Activated B cell treated with CpG ODN at 0.5 μM for 24 hours (primary cell): ENCODE measurements at regions of chr11 and their contacts with region 1.

Region 1: DNA sequence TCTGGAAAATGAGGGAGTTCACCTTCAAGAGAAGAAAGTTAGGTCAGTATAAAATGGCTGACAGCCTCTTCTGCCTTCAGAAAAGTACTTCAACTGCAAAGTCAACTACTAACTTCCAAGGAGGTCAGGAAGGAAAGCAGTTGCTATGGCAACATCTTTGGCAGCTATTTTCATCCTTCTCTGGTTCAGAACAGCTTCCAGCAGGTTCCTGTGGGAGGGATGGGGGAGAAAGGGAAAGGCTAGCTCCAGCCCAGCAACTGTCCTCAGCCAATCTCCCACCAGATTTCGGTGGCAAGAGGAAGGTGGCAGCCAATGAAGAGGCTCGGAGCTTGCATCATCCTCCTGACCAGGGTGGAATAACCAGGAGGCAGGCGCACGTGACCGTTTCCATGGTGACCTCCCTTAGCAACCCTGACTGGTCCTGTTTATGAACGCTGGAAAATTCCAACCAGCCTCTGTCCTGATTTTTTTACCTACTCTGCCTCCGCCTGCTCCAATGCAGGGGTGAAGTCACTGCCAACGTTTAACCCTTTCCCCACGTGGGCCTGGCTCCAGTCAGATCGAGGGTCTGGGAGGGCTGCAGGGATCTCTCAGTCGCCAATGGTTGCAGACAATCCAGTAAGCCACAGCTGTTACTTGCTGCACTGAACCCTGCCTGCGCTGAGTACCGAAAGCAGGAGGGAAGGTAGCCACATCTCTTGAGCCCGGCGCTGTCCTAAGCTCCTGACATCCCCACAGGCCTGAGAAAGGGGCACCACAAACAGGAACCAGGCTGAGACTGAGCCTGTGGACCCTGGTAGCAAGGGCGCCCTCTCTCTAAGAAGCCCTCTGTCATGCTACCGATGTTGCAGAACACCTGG is 11.2 kb upstream of the MALAT1 start:
- DNase-seq: no peak
- ATAC-seq: peak; percentile 56
- H3K4me3 Mint-ChIP-seq: peak overlapping the region; percentile 71
- H3K27ac Mint-ChIP-seq: peak overlapping the region; percentile 82
- H3K4me1 Mint-ChIP-seq: peaks cover 48% of the 10 kb centered on the region
- H3K27me3 Mint-ChIP-seq: no peaks in the 10 kb centered on the region
- CTCF ChIP-seq: no peak

Region 2: DNA sequence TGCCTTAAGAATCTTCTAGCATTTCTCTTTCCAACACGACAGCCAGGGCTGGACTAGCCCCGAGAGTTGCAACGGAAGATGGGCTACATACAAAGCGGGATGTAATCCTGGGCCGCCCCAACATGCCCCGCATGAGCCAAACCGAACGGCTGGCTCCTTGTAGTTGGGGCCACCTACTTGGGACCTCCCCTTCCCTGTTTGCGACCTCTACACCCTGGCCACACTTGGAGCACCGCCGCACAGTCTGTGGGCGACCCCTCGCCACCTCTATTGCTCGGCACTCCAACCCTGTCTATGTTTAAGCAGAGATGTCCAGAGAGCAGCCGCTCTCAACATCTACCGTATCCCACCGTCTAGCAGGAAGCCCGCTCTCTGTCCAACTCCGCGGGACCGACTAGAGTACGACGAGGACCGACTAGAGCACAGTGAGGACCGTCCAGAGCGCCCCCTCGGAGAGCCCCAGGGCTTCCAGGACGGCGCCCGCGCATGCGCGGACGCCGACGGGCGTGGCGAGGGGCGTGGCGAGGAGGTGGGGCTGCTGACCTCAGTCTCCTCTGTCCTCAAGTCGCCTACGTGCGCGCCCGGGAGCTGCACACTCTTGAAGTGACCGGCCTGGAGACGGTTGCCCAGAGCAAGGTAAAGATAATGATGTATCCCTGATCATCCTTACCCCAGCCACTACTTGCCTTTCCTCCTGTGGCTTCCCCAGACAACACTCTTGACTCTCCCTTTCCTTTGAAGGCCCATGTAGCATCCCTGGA is 32.8 kb before region 1 on chr11:
- CTCF ChIA-PET with region 1: no interaction called
- POLR2A ChIA-PET with region 1: interaction called, 1,949 read pairs
- intact Hi-C with region 1: no loop called
- DNase-seq: peak; percentile 83
- ATAC-seq: peak; percentile 98
- H3K4me3 Mint-ChIP-seq: peak overlapping the region; percentile 95
- H3K27ac Mint-ChIP-seq: peak overlapping the region; percentile 90
- H3K4me1 Mint-ChIP-seq: peaks cover 32% of the 10 kb centered on the region
- H3K27me3 Mint-ChIP-seq: no peaks in the 10 kb centered on the region
- CTCF ChIP-seq: no peak

Region 3: GRCh38 chr11:65477149-65477965 is 10.3 kb before region 1 on chr11:
- CTCF ChIA-PET with region 1: interaction called, 11 read pairs
- POLR2A ChIA-PET with region 1: interaction called, 1,949 read pairs
- intact Hi-C with region 1: loop called (anchors 1 kb)
- DNase-seq: peak; percentile 92
- ATAC-seq: peak; percentile 86
- H3K4me3 Mint-ChIP-seq: peak overlapping the region; percentile 96
- H3K27ac Mint-ChIP-seq: peak overlapping the region; percentile 99
- H3K4me1 Mint-ChIP-seq: peaks cover 24% of the 10 kb centered on the region
- H3K27me3 Mint-ChIP-seq: no peaks in the 10 kb centered on the region
- CTCF ChIP-seq: no peak

Region 4: GRCh38 chr11:67071420-67072284 is 1584.0 kb after region 1 on chr11:
- CTCF ChIA-PET with region 1: no interaction called
- POLR2A ChIA-PET with region 1: interaction called, 10 read pairs
- intact Hi-C with region 1: no loop called
- DNase-seq: peak; percentile 55
- ATAC-seq: peak; percentile 91
- H3K4me3 Mint-ChIP-seq: peak overlapping the region; percentile 32
- H3K27ac Mint-ChIP-seq: no peak overlapping the region
- H3K4me1 Mint-ChIP-seq: peaks cover 3% of the 10 kb centered on the region
- H3K27me3 Mint-ChIP-seq: peaks cover 13% of the 10 kb centered on the region
- CTCF ChIP-seq: no peak